Calu3 (cell line): ENCODE measurements at regions of chr6 and their contacts with region 1.

Region 1: DNA sequence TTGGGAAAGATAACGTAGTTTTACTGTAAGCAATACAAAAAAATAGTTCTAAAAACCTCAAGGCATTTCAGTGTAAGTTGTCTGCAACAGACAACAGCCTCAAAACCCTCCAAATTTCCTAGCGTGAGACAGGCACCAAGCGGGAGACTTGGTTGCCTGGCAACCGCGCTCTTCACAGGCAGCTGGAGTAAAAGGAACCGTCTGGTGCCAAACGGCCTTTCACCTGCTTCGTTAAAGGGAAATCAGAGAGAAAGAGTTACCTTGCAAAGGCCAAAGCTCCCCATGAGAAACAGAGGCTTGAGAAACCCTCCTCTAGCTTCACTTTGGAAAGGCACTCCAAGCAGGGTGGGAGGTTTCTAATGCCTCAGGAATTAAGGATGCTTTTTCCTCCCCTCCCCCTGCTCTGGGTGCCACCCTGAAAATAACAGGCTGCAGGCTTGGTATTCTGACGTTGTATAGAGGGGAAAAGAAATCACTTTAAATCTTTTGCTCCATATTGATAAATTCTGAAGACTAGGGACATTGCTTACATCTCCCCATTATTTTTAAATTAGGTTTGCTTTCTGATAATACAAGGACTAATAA is 129.7 kb upstream of the UFL1 start:
- DNase-seq: peak; percentile 34
- H3K4me3 Mint-ChIP-seq: no peak overlapping the region
- H3K27ac Mint-ChIP-seq: no peak overlapping the region
- H3K4me1 Mint-ChIP-seq: peaks cover 9% of the 10 kb centered on the region
- H3K27me3 Mint-ChIP-seq: no peaks in the 10 kb centered on the region
- CTCF ChIP-seq: no peak

Region 2: GRCh38 chr6:96257751-96258150 is 134.1 kb before region 1 on chr6:
- CTCF ChIA-PET with region 1: no interaction called
- intact Hi-C with region 1: no loop called
- DNase-seq: no peak
- H3K4me3 Mint-ChIP-seq: no peak overlapping the region
- H3K27ac Mint-ChIP-seq: no peak overlapping the region
- H3K4me1 Mint-ChIP-seq: no peaks in the 10 kb centered on the region
- H3K27me3 Mint-ChIP-seq: no peaks in the 10 kb centered on the region
- CTCF ChIP-seq: no peak

Region 3: DNA sequence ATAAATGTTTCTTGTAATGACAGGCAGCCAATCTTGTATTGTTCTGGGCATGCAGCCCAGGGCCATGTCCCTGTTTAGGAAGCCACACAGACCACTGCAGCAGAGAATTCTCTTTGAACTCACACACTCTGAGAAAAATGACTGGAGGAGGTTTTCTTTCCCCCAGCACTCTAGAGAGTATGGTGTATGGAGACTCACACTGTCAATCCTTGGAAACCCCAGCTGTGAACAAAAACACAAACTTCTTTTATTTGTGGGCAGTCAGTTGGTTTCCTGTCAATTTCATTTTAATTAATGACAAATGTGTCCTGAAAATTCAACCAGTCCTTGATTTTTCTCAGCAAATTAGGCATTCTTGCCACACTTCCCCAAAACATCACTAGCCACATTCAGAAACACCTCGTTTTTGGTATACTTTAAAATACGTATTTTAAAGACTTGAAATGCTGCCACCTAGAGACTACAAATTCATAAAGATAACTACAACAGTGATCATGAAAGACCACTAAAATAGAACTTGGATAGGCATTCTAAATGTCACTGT is 76.9 kb after region 1 on chr6:
- CTCF ChIA-PET with region 1: no interaction called
- intact Hi-C with region 1: loop called (anchors 1 kb)
- DNase-seq: no peak
- H3K4me3 Mint-ChIP-seq: no peak overlapping the region
- H3K27ac Mint-ChIP-seq: no peak overlapping the region
- H3K4me1 Mint-ChIP-seq: no peaks in the 10 kb centered on the region
- H3K27me3 Mint-ChIP-seq: no peaks in the 10 kb centered on the region
- CTCF ChIP-seq: no peak

Region 4: DNA sequence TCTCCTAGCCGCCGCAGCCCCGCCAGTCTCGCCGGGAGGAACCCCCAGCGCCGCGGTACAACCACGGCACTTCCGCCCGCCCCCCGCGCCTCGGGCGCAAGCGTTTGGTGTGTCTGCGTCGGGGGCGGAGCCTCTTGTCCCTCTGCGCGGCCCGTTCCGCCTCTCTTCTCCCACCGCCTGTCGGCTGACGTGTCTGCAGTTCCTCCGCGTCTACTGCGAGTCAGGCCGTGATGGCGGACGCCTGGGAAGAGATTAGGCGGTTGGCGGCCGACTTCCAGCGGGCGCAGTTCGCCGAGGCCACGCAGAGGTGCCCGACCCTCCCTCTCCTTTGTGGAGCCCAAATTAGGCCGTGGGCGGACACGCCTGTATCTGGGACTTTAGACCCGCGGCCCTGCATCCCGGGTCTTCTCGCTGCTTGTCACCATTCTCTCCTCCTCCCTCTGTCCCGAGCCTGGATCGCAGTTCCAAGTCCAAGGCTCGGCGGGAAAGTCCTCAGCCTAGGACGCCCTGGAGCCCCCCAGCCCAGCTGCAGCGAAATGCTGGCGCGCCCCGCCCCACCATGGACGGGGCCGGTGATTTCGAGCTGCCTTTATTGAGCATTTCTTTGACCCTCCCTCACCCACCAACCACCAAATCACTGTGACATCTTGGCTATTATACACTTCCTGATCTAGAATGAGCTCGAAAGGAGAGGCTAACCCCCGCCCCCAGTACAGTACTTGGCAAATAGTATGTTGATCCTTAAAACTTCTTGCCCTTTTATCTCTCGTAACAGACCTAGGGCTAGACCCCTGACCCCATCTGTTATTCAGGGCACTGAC is 130.0 kb after region 1 on chr6 and contains the start of gene UFL1:
- CTCF ChIA-PET with region 1: interaction called, 3 read pairs
- intact Hi-C with region 1: loop called (anchors 10 kb)
- DNase-seq: peak; percentile 93
- H3K4me3 Mint-ChIP-seq: peak within 1 kb of the TSS; percentile 98
- H3K27ac Mint-ChIP-seq: peak within 1 kb of the TSS; percentile 99
- H3K4me1 Mint-ChIP-seq: no peaks in the 10 kb centered on the region
- H3K27me3 Mint-ChIP-seq: no peaks in the 10 kb centered on the region
- CTCF ChIP-seq: no peak
- total RNA-seq, gene UFL1: 16.5 and 19.3 TPM in 2 replicates